Breast epithelium (tissue), 4 donors: ENCODE measurements at regions of chr4 and their contacts with region 1.

Region 1: DNA sequence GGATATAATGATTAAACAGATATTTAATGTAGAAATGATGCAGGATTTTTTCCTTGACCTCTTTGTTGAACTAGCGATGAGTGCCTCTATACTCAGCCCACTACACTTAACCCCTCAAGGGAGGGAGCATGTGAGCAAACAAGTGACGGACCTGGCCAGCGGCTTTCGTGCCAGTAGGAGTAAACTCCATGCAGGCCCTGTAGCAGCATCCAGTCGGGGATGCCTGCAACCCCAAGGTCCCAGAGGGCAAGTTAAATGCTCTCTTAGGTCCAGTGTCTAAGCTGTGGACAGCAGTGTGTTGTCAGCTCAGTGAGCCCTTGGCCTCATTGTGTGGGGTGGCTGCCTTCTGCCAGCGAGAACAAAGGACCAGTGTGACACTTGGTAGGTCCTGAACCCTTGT is 708.7 kb downstream of the TECRL start:
- DNase-seq: no peak
- H3K4me3 ChIP-seq: no peak overlapping the region
- H3K27ac ChIP-seq: no peak overlapping the region
- H3K4me1 ChIP-seq: no peaks in the 10 kb centered on the region
- H3K27me3 ChIP-seq: no peaks in the 10 kb centered on the region
- CTCF ChIP-seq: no peak
- POLR2A ChIP-seq: no peak

Region 2: GRCh38 chr4:63906660-63907183 is 206.2 kb after region 1 on chr4:
- intact Hi-C with region 1: loop called (anchors 5 kb)
- DNase-seq: no peak
- H3K4me3 ChIP-seq: no peak overlapping the region
- H3K27ac ChIP-seq: no peak overlapping the region
- H3K4me1 ChIP-seq: no peaks in the 10 kb centered on the region
- H3K27me3 ChIP-seq: no peaks in the 10 kb centered on the region
- CTCF ChIP-seq: no peak
- POLR2A ChIP-seq: no peak